Pancreas (tissue), 10 donors: ENCODE measurements at regions of chr15 and their contacts with region 1.

Region 1: DNA sequence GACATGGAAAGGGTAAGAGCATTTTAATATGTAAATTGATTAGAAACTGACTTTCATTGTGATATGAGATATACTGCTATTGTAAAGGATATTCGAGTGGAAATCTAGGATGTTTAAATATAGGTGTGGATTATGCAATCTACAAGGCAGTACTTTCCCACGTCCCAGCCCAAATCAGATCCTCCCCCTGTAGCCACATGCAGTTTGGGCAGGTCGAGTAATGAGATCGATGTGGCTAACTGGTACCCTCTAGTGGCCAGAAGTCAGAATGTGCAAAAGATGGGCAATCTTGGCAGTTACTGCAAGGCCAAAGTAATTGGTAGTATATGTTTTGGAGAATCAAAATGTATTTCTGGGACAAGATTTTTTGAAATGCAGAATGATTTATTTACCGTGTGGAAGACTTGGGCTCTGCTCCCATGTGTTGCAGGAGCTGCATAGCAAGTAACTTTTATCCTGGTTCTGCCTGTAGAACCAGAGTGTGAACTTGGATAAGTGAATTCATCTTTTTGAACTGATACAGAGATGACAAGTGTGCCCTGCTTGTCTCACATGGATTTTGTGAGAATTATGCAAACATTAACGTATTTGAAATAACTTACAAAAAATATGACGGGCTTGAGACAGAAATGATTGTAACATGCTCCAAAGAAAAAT is 94.5 kb upstream of the ADAMTSL3 start:
- DNase-seq: peak in 4 of 6 donors; percentile 34 to 68 (median 40)
- ATAC-seq: peak; percentile 63 to 98 (median 91)
- H3K4me3 ChIP-seq: no peak overlapping the region
- H3K27ac ChIP-seq: no peak overlapping the region
- H3K4me1 ChIP-seq: no peaks in the 10 kb centered on the region
- H3K27me3 ChIP-seq: peaks cover 0 to 3% (median 0%) of the 10 kb centered on the region in 4 donors
- CTCF ChIP-seq: peak; percentile 41 to 77 (median 60)

Region 2: DNA sequence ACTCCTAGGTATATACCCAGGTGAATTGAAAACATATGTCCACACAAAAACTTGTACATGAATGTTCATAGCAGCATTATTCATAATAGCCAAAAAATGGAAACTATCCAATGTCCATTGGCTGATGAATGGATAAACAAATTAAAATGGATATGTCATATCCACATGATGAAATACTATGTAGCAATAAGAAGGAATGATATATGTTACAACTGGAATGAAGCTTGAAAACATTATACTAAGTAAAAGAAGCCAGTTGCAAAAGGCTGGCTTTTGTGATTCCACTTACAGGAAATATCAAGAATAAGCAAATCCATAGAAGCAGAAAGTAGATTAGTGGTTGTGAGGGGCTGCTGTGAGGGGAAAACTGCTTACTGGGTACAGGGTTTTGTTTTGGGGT is 308.6 kb before region 1 on chr15:
- intact Hi-C with region 1: loop called in 1 of 3 experiments (anchors 10 kb)
- DNase-seq: no peak
- ATAC-seq: no peak
- H3K4me3 ChIP-seq: no peak overlapping the region
- H3K27ac ChIP-seq: no peak overlapping the region
- H3K4me1 ChIP-seq: no peaks in the 10 kb centered on the region
- H3K27me3 ChIP-seq: peaks cover 0 to 9% (median 2%) of the 10 kb centered on the region in 4 donors
- CTCF ChIP-seq: no peak

Region 3: GRCh38 chr15:83436458-83437158 is 122.8 kb before region 1 on chr15:
- intact Hi-C with region 1: loop called in 1 of 3 experiments (anchors 5 kb)
- DNase-seq: no peak
- ATAC-seq: peak in 1 of 4 donors; percentile 37
- H3K4me3 ChIP-seq: no peak overlapping the region
- H3K27ac ChIP-seq: no peak overlapping the region
- H3K4me1 ChIP-seq: no peaks in the 10 kb centered on the region
- H3K27me3 ChIP-seq: no peaks in the 10 kb centered on the region
- CTCF ChIP-seq: no peak

Region 4: GRCh38 chr15:83446904-83447709 is 112.3 kb before region 1 on chr15 and contains the start of gene SH3GL3:
- intact Hi-C with region 1: loop called in 2 of 3 experiments (anchors 5 kb)
- DNase-seq: peak; percentile 69 to 91 (median 80)
- ATAC-seq: peak; percentile 98
- H3K4me3 ChIP-seq: peak within 1 kb of the TSS; percentile 31 to 57 (median 40)
- H3K27ac ChIP-seq: no peak within 1 kb of the TSS
- H3K4me1 ChIP-seq: peaks cover 0 to 6% (median 5%) of the 10 kb centered on the region in 3 donors
- H3K27me3 ChIP-seq: no peaks in the 10 kb centered on the region
- CTCF ChIP-seq: no peak
- total RNA-seq, gene SH3GL3: 0.73 to 0.87 TPM in 2 of 6 donors, not detected in the others

Region 5: GRCh38 chr15:84035399-84035766 is 475.9 kb after region 1 on chr15:
- intact Hi-C with region 1: loop called in 1 of 3 experiments (anchors 10 kb)
- DNase-seq: no peak
- ATAC-seq: peak; percentile 80 to 94 (median 92)
- H3K4me3 ChIP-seq: no peak overlapping the region
- H3K27ac ChIP-seq: no peak overlapping the region
- H3K4me1 ChIP-seq: peaks cover 0 to 6% (median 3%) of the 10 kb centered on the region in 3 donors
- H3K27me3 ChIP-seq: no peaks in the 10 kb centered on the region
- CTCF ChIP-seq: peak; percentile 13 to 48 (median 17)